CD8-positive, alpha-beta T cell (primary cell): ENCODE measurements at regions of chr3 and their contacts with region 1.

Region 1: GRCh38 chr3:52444860-52445793 is at the start of gene SEMA3G:
- DNase-seq: peak; percentile 46 to 80 (median 71)
- ATAC-seq: peak; percentile 95
- H3K4me3 ChIP-seq: no peak within 1 kb of the TSS
- H3K4me3 Mint-ChIP-seq: no peak within 1 kb of the TSS
- H3K27ac ChIP-seq: no peak within 1 kb of the TSS
- H3K27ac Mint-ChIP-seq: no peak within 1 kb of the TSS
- H3K4me1 ChIP-seq: peaks cover 16% of the 10 kb centered on the region
- H3K4me1 Mint-ChIP-seq: peaks cover 7% of the 10 kb centered on the region
- H3K27me3 ChIP-seq: no peaks in the 10 kb centered on the region
- H3K27me3 Mint-ChIP-seq: no peaks in the 10 kb centered on the region
- CTCF ChIP-seq: peak; percentile 51
- total RNA-seq, gene SEMA3G: 0.05 TPM in 1 of 2 experiments, not detected in the other

Region 2: DNA sequence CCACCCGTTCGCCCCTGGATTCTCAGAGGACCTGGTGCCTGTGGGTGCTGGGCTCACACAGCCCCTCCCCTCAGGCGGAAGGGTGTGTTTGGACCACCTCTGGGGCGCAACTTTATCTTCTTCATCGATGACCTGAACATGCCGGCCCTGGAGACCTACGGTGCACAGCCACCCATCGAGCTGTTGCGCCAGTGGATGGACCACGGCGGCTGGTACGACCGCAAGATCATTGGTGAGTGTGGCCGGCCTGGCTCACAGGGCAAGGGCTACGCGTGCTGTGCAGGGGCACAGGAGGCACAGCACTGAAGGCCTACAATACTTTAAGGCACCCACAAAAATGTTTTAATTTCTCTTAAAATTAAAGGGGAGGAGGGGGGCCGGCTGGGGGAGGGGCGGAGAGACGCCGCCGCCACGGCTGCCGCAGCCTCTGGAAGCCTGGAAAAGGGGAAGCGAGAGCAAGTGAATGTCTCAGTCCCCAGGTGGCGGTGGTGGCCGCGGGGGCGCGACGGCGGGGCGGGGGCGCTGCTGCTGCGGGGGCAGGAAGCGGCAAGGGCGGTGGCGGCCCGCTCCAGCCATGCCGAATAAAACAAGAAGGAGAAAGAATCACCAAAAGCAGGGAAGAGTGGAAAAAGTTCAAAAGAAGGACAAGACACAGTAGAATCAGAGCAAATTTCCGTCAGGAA is 72.2 kb before region 1 on chr3:
- CTCF ChIA-PET with region 1: interaction called, 6 read pairs
- POLR2A ChIA-PET with region 1: no interaction called
- intact Hi-C with region 1: loop called in 1 of 2 experiments (anchors 2 kb)
- DNase-seq: peak in 6 of 9 experiments; percentile 9 to 43 (median 31)
- ATAC-seq: peak; percentile 59
- H3K4me3 ChIP-seq: no peak overlapping the region
- H3K4me3 Mint-ChIP-seq: no peak overlapping the region
- H3K27ac ChIP-seq: no peak overlapping the region
- H3K27ac Mint-ChIP-seq: no peak overlapping the region
- H3K4me1 ChIP-seq: peaks cover 12% of the 10 kb centered on the region
- H3K4me1 Mint-ChIP-seq: peaks cover 10% of the 10 kb centered on the region
- H3K27me3 ChIP-seq: no peaks in the 10 kb centered on the region
- H3K27me3 Mint-ChIP-seq: no peaks in the 10 kb centered on the region
- CTCF ChIP-seq: no peak

Region 3: GRCh38 chr3:52406231-52406661 is 38.9 kb before region 1 on chr3:
- CTCF ChIA-PET with region 1: interaction called, 15 read pairs
- POLR2A ChIA-PET with region 1: no interaction called
- intact Hi-C with region 1: no loop called
- DNase-seq: peak in 2 of 9 experiments; percentile 32 to 33
- ATAC-seq: no peak
- H3K4me3 ChIP-seq: no peak overlapping the region
- H3K4me3 Mint-ChIP-seq: no peak overlapping the region
- H3K27ac ChIP-seq: no peak overlapping the region
- H3K27ac Mint-ChIP-seq: no peak overlapping the region
- H3K4me1 ChIP-seq: peaks cover 31% of the 10 kb centered on the region
- H3K4me1 Mint-ChIP-seq: peaks cover 28% of the 10 kb centered on the region
- H3K27me3 ChIP-seq: no peaks in the 10 kb centered on the region
- H3K27me3 Mint-ChIP-seq: no peaks in the 10 kb centered on the region
- CTCF ChIP-seq: no peak

Region 4: DNA sequence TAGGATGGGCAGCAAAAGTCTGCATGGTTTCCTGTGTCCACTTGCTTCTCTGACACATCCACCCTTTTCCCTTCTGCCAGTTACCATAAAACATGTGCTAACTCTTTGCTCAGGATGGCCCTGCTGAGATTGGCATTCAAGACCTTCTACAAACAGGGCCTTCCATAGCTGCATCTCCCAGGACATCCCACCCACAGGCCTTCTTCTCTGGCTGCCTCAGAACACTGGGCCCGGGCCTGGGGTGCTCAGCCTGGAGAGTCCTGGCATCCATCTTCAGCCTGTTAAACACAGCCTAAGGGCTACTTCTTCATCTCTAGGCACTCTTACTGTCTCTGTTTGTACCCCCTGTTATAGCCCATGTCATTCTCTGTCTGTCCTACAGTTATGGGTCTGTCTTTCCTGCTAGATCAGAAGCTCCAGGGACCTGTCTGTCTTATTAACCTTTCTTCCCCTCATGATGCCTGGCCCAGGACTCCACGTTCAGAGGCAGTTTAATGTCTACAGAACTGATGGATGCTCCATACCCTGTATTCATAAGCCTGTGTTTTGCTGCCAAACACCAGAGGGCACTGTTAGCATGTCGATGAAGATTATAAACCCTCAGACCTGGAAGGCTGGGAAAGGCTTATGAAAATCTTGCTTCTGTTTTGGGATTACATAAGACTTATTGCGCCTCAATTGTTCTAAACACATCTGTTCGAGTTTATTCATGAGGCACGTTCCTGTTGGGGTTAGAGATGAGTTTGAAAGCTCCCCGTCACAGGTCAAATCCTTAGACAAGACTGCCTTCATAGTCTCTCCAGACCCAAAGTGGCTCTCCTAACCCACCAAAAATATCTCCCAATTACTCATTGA is 16.7 kb before region 1 on chr3:
- CTCF ChIA-PET with region 1: interaction called, 115 read pairs
- POLR2A ChIA-PET with region 1: no interaction called
- intact Hi-C with region 1: loop called (anchors 1 kb)
- DNase-seq: peak in 3 of 9 experiments; percentile 25 to 67 (median 54)
- ATAC-seq: no peak
- H3K4me3 ChIP-seq: no peak overlapping the region
- H3K4me3 Mint-ChIP-seq: no peak overlapping the region
- H3K27ac ChIP-seq: no peak overlapping the region
- H3K27ac Mint-ChIP-seq: no peak overlapping the region
- H3K4me1 ChIP-seq: no peaks in the 10 kb centered on the region
- H3K4me1 Mint-ChIP-seq: no peaks in the 10 kb centered on the region
- H3K27me3 ChIP-seq: no peaks in the 10 kb centered on the region
- H3K27me3 Mint-ChIP-seq: no peaks in the 10 kb centered on the region
- CTCF ChIP-seq: peak; percentile 60

Region 5: DNA sequence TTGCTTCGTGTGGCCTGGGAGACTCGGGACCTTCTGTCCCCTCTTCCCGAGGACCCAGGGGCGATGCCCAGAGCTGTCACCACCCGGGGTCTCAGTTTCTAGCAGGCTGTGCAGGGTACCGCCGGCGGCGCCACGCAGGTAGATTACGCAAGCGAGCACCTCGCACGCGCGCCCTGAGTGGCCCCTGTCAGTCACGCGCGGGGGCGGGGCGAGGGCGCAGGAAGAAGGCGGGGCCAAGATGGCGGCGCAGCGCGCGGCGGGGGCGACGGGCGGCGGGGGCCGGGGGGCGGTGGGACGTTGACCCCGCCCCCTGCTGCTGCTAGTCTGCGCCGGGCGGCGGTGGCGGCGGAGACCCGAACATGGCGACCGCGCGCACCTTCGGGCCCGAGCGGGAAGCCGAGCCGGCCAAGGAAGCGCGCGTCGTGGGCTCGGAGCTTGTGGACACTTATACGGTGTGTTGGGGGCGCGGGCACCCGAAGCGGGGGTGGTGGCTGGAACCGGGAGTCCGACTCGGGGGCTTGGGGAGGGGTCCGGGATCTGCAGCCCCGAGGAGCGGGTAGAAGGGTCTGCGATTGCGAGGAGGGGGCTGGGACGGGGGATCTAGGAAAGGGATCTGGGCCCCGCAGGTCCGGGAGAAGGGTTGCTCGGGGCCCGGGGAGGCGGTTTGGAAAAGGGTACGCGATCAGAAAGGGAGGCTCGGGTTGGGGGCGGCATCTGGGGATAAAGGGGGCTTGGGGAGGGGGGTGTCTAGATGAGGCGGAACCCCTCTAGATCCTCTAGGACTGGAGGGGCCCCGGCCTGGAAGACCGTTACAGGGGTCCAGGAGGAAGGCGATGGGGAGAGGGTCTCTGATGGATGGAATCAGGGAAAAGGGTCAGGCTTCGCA is 10.4 kb after region 1 on chr3 and contains the start of gene NISCH:
- CTCF ChIA-PET with region 1: interaction called, 28 read pairs
- POLR2A ChIA-PET with region 1: no interaction called
- intact Hi-C with region 1: no loop called
- DNase-seq: peak; percentile 92 to 99 (median 96)
- ATAC-seq: peak; percentile 94
- H3K4me3 ChIP-seq: peak within 1 kb of the TSS; percentile 86 to 97
- H3K4me3 Mint-ChIP-seq: peak within 1 kb of the TSS; percentile 91
- H3K27ac ChIP-seq: peak within 1 kb of the TSS; percentile 90 to 97
- H3K27ac Mint-ChIP-seq: peak within 1 kb of the TSS; percentile 99
- H3K4me1 ChIP-seq: peaks cover 26% of the 10 kb centered on the region
- H3K4me1 Mint-ChIP-seq: peaks cover 43% of the 10 kb centered on the region
- H3K27me3 ChIP-seq: no peaks in the 10 kb centered on the region
- H3K27me3 Mint-ChIP-seq: no peaks in the 10 kb centered on the region
- CTCF ChIP-seq: no peak
- total RNA-seq, gene NISCH: 150 to 163 TPM